Activated naive CD4-positive, alpha-beta T cell treated with anti-CD3 and anti-CD28 coated beads for 36 hours (primary cell): ENCODE measurements at regions of chr1 and their contacts with region 1.

Region 1: GRCh38 chr1:8970870-8971337 is 25.2 kb downstream of the CA6 start:
- DNase-seq: peak; percentile 81
- H3K4me3 Mint-ChIP-seq: peak overlapping the region; percentile 96
- H3K27ac Mint-ChIP-seq: peak overlapping the region; percentile 94
- H3K4me1 Mint-ChIP-seq: peaks cover 35% of the 10 kb centered on the region
- H3K27me3 Mint-ChIP-seq: no peaks in the 10 kb centered on the region

Region 2: GRCh38 chr1:8423650-8424538 is 547.0 kb before region 1 on chr1:
- CTCF ChIA-PET with region 1: no interaction called
- intact Hi-C with region 1: loop called (anchors 1 kb)
- DNase-seq: peak; percentile 62
- H3K4me3 Mint-ChIP-seq: peak overlapping the region; percentile 85
- H3K27ac Mint-ChIP-seq: peak overlapping the region; percentile 97
- H3K4me1 Mint-ChIP-seq: peaks cover 38% of the 10 kb centered on the region
- H3K27me3 Mint-ChIP-seq: no peaks in the 10 kb centered on the region

Region 3: DNA sequence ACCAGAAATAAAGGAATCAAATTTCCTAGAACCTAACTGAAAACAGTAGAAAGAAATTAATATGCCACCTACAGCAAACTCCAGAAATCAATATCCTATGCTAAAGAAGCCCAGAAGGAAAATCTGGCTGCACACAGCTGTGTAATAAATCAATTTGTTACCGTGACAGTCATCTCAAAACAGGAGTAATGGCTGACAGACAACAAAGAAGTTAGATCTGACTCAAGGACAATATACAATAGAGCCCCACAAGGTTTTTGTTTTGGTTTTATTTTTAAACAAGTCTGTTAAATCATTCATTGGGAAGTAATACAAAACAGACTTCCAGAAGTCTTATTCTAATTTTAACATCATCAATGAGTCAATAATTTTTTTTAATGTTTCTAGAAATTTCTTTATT is 321.9 kb before region 1 on chr1:
- CTCF ChIA-PET with region 1: no interaction called
- intact Hi-C with region 1: no loop called
- DNase-seq: peak; percentile 13
- H3K4me3 Mint-ChIP-seq: no peak overlapping the region
- H3K27ac Mint-ChIP-seq: no peak overlapping the region
- H3K4me1 Mint-ChIP-seq: peaks cover 49% of the 10 kb centered on the region
- H3K27me3 Mint-ChIP-seq: no peaks in the 10 kb centered on the region

Region 4: DNA sequence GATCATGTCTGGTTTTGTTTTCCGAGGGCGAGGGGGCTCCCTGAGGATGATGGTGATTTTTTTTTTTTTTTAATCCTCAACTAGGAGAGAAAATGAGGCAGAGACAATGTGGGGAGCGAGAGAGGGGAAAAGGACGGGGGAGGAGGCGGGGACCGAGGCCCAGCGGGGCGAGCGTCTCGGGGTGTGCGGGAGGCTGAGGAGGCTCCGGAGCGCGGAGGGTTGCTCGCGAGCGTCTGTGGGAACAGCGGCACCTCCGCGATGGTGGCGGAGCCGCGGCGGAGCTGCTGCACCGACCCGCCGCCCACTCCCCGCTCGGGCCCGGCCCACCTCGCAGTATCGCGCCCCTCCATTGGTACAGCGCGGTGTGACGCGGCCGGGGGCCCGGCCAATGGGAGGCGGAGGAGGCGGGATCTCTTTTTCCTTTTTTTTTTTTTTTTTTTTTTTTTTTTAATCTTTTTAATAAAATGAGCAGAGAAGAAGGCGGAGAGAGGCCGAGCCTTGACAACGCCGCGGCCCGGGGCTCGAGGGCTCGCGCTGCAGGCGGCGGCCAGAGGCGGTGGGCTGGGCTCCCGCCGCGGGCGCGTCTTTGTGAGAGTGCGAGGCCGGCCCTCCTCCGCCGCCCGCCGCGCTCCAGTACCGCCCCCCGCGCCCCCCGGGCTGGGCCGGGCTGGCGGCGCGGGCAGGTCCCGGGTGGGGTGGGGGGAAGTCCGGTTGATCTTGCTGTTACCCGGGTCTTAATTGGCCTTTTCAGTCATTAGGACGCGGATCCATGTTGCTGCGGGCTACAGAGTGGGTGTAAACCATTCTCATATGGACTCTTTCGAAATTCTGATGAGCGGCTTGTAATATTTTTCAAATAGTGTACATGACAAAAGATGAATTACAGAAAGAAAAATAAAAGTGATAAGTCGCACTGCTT is 153.2 kb before region 1 on chr1 and contains the start of gene RERE:
- CTCF ChIA-PET with region 1: no interaction called
- intact Hi-C with region 1: loop called (anchors 5 kb)
- DNase-seq: peak; percentile 94
- H3K4me3 Mint-ChIP-seq: peak within 1 kb of the TSS; percentile 86
- H3K27ac Mint-ChIP-seq: peak within 1 kb of the TSS; percentile 93
- H3K4me1 Mint-ChIP-seq: peaks cover 45% of the 10 kb centered on the region
- H3K27me3 Mint-ChIP-seq: no peaks in the 10 kb centered on the region
- total RNA-seq, gene RERE: 46.4 to 47.6 TPM

Region 5: DNA sequence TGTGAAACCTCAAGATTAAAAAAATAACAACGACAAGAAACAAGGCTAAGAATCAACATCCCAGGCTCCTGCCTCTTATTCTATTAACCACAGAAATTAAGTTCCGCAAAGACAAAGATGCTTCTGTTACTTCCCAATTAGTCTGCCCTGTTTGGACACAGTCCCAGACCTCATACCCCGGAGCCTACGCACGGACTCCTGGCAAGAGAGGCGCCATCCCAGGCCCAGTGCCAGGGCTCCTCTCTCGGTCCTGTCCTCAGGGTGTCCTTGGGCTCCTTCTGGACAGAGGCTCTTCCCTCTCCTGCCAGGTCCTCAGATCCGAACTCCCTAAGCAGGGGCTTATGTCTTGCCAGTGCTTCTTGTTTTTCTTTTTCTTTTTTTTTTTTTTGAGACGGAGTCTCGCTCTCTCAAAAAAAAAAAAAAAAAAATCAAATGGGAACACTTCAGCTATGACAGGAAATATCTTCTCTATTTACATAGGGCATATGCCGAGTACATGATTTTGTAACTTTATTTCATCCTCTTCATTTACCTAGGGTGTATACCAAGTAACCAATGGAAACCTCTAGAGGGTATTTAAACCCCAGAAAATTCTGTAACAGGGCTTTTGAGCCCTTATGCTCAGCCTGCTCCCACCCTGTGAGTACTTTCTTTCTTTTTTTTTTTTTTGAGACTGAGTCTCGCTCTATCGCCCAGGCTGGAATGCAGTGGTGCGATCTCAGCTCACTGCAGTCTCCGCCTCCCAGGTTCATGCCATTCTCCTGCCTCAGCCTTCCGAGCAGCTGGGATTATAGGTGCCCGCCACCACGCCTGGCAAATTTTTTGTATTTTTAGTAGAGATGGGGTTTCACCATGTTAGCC is 80.7 kb before region 1 on chr1:
- CTCF ChIA-PET with region 1: no interaction called
- intact Hi-C with region 1: no loop called
- DNase-seq: no peak
- H3K4me3 Mint-ChIP-seq: no peak overlapping the region
- H3K27ac Mint-ChIP-seq: no peak overlapping the region
- H3K4me1 Mint-ChIP-seq: peaks cover 7% of the 10 kb centered on the region
- H3K27me3 Mint-ChIP-seq: no peaks in the 10 kb centered on the region

Region 6: GRCh38 chr1:8913111-8913856 is 57.6 kb before region 1 on chr1:
- CTCF ChIA-PET with region 1: interaction called, 4 read pairs
- intact Hi-C with region 1: loop called (anchors 1 kb)
- DNase-seq: no peak
- H3K4me3 Mint-ChIP-seq: no peak overlapping the region
- H3K27ac Mint-ChIP-seq: no peak overlapping the region
- H3K4me1 Mint-ChIP-seq: peaks cover 6% of the 10 kb centered on the region
- H3K27me3 Mint-ChIP-seq: no peaks in the 10 kb centered on the region

Region 7: DNA sequence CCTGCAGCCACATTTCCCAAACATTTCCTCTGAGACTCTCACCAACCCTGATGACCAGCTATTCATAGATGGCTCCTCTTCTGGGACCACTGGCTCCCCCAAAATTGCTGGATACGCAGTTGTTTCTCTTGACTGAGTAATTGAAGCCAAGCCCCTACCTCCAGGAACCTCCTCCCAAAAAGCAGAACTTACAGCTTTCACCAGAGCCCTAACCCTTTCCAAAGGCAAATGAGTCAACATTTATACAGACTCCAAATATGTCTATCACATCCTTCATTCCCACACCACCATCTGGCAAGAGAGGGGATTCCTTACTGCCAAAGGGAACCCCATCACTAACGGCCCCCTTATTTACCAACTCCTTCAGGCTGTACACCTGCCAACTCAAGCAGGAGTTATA is 45.5 kb before region 1 on chr1:
- CTCF ChIA-PET with region 1: interaction called, 5 read pairs
- intact Hi-C with region 1: loop called (anchors 2 kb)
- DNase-seq: no peak
- H3K4me3 Mint-ChIP-seq: no peak overlapping the region
- H3K27ac Mint-ChIP-seq: no peak overlapping the region
- H3K4me1 Mint-ChIP-seq: peaks cover 31% of the 10 kb centered on the region
- H3K27me3 Mint-ChIP-seq: no peaks in the 10 kb centered on the region

Region 8: DNA sequence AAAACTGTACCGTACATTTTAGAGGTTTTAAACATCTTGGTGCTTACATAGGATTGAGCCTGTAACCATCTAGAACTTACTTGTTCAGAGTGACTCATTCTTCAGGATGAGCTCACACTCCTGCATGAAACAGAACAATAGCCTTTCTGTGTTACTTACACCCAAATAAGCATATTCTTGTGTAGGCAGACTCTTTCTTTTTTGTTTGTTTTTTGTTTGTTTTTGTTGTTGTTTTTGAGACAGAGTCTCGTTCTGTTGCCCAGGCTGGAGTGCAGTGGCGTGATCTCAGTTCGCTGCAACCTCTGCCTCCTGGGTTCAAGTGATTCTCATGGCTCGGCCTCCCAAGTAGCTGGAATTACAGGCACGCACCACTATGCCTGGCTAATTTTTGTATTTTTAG is 29.0 kb before region 1 on chr1:
- CTCF ChIA-PET with region 1: interaction called, 5 read pairs
- intact Hi-C with region 1: loop called (anchors 1 kb)
- DNase-seq: no peak
- H3K4me3 Mint-ChIP-seq: no peak overlapping the region
- H3K27ac Mint-ChIP-seq: no peak overlapping the region
- H3K4me1 Mint-ChIP-seq: peaks cover 85% of the 10 kb centered on the region
- H3K27me3 Mint-ChIP-seq: no peaks in the 10 kb centered on the region